AG04450 (cell line): ENCODE measurements at regions of chr17 and their contacts with region 1.

Region 1: DNA sequence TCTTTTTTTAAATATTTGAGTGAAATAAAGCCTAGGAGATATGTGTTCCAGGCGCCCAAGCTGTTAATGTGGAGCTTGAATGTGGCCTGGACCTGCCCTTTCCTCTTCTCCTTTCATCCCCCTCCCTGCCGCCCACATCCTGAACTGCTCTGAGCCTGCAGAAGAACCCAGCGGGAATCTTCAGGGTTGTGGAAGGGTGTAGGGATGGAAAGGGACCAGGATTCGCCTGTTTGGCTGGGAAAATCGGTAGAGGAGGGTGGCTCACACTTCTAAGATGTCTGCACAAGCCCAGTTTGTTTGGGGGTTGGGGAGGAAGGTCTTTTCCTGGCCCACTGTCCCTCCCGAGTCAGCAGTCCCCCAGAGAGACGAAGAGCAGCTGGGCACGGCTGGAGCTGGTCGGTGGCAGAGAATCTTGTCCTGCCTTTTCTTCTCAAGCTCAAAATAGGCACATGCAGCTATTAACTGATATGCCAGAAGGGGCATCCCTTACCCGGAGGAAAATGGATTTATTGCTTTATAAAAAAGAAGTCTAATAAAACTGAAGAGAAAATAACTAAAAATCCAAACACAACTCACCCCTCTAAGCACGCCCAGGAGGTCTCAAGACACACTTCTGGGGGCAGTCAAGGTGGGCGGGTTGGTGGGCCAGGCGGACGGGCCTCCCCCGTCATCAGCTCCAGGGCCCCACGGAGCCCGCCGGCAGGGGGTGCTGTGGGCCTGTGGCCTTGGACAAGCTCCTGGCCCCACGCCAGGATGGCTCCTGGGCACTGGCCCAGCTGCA is 11.5 kb upstream of the PITPNA start:
- DNase-seq: peak; percentile 55
- H3K4me3 ChIP-seq: no peak overlapping the region
- H3K27ac ChIP-seq: no peak overlapping the region
- H3K27me3 ChIP-seq: peaks cover 2% of the 10 kb centered on the region
- CTCF ChIP-seq: peak; percentile 92

Region 2: DNA sequence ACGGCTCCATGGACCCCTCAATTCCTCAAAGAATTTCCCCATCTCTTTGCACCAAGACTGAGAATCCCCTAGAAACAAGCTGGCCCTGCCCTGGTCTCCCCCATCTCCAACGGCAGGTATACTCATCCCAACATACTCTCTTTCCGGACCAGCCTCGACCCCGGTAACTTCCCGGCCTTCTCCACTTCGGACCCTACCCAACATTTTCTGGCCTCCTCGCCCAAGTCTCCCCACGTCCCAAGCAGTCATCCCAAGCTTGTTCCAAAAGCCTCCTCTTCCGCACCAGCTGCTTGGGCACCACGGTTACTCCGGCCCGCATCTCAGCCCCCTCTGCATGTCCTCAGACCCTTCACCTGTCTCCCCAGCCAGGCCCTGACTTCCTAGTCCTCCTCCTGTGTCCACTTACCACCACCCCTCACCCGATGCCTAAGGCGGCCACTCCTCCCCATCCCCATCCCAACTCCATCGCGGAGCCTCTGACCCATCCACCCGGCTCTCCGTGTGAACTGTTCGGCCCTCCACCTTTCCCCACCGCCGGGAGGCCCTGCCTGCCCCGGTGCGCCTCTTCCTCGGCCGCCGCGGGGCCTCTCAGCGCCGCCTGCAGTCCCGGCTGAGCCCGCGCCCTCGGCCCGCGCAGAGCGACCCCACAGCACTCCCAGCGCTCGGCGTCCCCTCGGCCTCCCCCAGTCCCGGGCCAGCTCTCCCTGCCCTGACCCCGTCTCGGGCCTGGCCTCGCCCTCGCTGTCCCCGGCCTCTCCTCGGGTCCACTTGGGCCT is 12.5 kb before region 1 on chr17:
- CTCF ChIA-PET with region 1: interaction called, 15 read pairs
- POLR2A ChIA-PET with region 1: no interaction called
- DNase-seq: no peak
- H3K4me3 ChIP-seq: peak overlapping the region; percentile 80
- H3K27ac ChIP-seq: no peak overlapping the region
- H3K27me3 ChIP-seq: no peaks in the 10 kb centered on the region
- CTCF ChIP-seq: peak; percentile 38

Region 3: GRCh38 chr17:1628856-1629646 is 54.9 kb after region 1 on chr17:
- CTCF ChIA-PET with region 1: interaction called, 43 read pairs
- POLR2A ChIA-PET with region 1: interaction called, 8 read pairs
- DNase-seq: peak; percentile 70
- H3K4me3 ChIP-seq: peak overlapping the region; percentile 78
- H3K27ac ChIP-seq: no peak overlapping the region
- H3K27me3 ChIP-seq: peaks cover 7% of the 10 kb centered on the region
- CTCF ChIP-seq: no peak

Region 4: DNA sequence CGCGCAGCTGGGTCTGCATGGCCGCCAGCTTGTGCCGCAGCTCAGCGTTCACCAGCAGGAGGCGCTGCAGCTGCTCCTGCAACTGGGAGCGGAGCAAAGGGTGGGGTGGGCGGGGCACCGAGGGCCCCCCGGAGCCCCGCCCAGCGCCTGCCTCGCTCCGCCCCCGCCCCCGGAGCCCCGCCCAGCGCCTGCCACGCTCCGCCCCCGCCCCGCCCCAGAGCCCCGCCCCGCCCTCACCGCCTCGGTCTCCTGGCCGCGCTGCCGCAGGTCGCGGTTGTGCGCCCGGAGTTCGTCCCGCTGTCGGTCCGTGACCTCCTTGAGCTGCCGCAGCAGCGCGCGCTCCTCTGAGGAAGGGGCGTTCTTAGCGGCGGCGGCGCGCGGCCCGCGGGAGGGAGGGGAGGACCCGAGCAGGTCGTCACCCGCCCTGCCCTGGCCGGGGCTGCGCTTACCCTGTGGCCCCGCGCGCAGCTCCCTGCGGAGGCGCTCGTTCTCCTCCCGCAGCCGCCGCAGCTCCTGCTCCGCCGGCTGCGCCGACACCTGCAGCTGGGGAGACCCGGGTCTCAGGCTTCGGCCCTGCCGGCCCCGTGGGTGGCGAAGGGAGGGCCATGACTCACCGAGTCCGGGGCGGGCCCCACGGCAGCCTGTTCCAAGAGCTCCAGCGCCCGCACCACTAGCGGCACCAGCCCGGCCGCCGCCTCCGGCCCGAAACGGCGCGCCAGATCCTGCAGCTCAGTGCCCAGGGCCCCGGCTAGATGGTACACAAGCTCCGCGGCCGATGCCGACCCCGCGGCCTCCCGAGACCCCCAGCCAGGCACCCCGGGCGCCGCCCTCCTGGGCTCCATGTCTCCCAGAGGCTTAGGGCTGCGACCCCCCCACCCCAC is 75.1 kb after region 1 on chr17:
- CTCF ChIA-PET with region 1: interaction called, 71 read pairs
- POLR2A ChIA-PET with region 1: interaction called, 18 read pairs
- DNase-seq: peak; percentile 93
- H3K4me3 ChIP-seq: peak overlapping the region; percentile 63
- H3K27ac ChIP-seq: peak overlapping the region; percentile 57
- H3K27me3 ChIP-seq: no peaks in the 10 kb centered on the region
- CTCF ChIP-seq: peak; percentile 78; the same call in 1 of the 2 replicates

Region 5: GRCh38 chr17:1783834-1784611 is 209.9 kb after region 1 on chr17:
- CTCF ChIA-PET with region 1: interaction called, 13 read pairs
- POLR2A ChIA-PET with region 1: no interaction called
- DNase-seq: peak; percentile 78
- H3K4me3 ChIP-seq: no peak overlapping the region
- H3K27ac ChIP-seq: peak overlapping the region; percentile 62
- H3K27me3 ChIP-seq: no peaks in the 10 kb centered on the region
- CTCF ChIP-seq: peak; percentile 90

Region 6: DNA sequence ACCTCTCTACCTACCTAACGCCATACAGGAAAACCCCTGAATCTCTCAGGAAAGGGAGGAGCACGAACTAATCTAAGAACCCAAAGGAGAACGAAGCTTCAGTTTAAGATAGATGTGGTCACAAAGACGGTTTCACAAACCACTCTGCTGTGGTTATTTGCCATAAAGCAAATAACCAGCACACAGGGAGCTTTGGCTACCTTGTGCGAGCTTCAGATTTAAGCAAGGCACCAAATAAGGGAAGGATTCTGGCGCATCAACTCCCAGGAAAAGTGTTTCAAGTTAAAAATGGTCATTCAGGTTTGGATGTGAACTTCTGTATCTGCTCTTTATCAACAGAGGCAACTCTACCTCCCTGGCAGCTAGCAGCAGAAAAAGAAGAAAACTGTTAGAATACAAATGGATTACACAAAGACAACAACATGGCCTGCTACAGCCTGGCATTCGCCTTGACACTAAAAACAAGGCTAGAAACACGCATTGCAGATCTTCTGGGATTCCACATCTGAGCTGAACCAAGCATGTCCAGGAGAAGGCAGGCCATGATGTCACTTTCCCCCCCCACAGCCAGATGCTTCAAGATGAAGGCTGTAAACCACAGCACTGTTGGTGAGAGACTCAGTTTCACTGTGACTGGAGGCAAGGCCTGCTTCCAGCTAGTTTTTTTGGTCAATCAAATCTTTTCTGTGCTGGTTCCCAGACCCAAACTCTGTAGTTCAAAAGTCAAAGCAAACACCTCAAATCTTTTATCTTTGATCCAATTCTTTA is 685.8 kb after region 1 on chr17:
- CTCF ChIA-PET with region 1: no interaction called
- POLR2A ChIA-PET with region 1: no interaction called
- DNase-seq: no peak
- H3K4me3 ChIP-seq: no peak overlapping the region
- H3K27ac ChIP-seq: no peak overlapping the region
- H3K27me3 ChIP-seq: no peaks in the 10 kb centered on the region
- CTCF ChIP-seq: no peak